ENCODE measurements at regions of chr15 and their contacts with region 1.

Region 1: DNA sequence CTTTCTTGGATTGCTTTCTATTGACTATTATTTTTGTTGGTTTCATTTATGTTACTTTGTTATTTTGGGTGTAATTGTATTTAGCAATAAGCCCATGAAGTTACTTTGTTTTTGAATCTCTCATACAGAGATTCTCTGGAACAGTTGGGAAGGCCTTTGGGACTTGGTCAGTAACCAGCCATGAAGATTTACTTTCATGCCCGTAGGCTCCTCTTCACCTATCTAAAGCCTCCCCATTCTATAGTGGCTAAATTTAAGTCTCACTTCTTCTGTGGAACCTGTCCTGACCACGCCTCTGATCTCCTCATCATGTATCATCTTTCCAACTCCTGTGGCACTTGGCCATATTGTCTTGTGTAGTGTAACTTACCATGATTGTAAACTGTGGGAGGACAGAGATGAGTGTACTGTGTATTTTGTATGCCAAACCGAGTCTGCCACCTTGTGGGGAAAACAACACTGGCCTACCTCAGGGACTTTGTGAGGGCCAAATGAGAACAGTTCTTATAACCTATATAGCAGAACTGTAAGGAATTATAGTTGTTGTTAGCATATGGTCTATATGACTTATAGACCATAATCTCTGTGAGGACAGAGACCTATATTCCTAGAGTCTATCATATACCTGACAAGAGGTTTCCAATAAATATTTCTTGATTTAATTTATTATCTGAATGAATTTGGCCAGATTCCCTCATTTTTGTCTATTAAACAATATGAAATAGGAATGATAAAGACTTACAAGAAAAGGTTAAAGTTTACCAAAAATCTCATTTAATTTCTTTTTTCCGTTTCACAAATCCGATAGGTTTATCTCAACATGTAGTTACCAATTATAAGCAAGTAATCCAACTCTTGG is 75.0 kb downstream of the STARD9 start:
- DNase-seq: no peak

Region 2: DNA sequence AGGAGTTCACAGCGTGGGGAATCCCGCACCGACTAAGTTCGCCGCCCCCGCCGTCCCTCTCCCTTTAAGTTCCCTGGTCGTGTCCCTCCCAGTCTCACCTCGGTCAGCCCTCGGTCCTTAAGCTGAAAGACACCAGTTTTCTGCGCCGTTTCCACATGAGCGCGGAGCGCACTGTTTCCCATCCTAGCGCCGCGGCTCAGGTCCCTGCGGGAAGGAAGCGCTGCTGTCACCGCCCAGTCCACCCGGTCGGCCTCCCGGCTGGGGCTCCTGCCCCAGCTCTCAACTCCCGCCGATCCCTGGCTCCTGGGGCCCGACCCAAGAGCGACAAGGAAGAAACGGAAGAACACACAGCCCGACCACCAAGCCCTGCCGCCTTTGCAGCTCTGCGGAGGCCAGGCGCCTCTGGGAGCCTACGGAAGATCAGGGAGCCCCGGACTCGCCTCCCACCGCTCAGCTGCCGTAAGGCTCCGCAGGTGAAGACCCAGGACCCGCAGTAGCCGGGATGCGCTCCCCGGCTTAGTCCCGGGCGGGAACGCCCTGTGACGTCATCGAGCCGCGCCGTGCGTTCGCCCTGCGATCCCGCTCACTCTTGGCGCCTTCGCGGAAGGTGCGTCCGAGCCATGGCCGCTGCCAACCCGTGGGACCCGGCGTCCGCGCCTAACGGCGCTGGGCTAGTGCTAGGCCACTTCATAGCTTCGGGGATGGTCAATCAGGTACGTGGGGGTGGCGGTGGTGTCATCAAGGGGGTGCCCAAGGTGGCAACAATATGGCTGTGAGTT is 102.0 kb before region 1 on chr15 and contains the starts of genes HAUS2 and LRRC57:
- intact Hi-C with region 1: loop called in 1 of 2 experiments (anchors 10 kb)
- DNase-seq: peak; percentile 96
- total RNA-seq, gene HAUS2: 16.1 to 19.5 TPM
- total RNA-seq, gene LRRC57: 13.1 to 14.3 TPM